SK-N-SH (cell line): ENCODE measurements at regions of chr3 and their contacts with region 1.

Region 1: GRCh38 chr3:50611464-50612233 is at the start of gene CISH:
- DNase-seq: peak; percentile 96
- H3K4me3 ChIP-seq: peak within 1 kb of the TSS; percentile 56 to 71
- H3K27ac ChIP-seq: peak within 1 kb of the TSS; percentile 14 to 73; a peak in 3 of 4 replicates
- H3K4me1 ChIP-seq: peaks cover 0 to 44% of the 10 kb centered on the region in 2 experiments; a peak in 1 of 4 replicates
- H3K27me3 ChIP-seq: no peaks in the 10 kb centered on the region
- CTCF ChIP-seq: peak; percentile 58
- EP300 ChIP-seq: no peak
- RAD21 ChIP-seq: no peak
- polyA plus RNA-seq, gene CISH: 2.0 and 2.6 TPM in 2 replicates

Region 2: DNA sequence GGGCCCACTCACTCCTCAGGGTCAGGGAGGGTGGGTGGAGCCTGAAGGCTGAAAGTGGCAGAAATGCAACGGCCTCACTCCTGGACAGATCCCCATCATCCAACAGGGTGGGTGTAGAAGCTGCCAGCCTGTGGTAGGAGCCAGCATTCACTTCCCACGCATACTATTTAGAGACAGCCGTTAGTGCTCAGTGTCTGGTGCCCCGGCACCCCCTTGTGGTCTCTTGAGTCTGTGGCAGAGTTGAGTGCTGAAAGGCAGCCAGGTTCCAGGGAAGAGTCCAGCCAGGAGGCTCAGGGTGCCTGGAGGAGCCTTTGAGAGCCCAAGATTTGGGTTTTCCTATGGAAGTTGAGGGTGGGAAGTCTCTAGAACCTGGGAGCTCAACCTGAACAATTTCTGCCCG is 422.4 kb before region 1 on chr3:
- CTCF ChIA-PET with region 1: no interaction called
- POLR2A ChIA-PET with region 1: no interaction called
- DNase-seq: peak; percentile 87
- H3K4me3 ChIP-seq: no peak overlapping the region; a peak in 1 of 4 replicates
- H3K27ac ChIP-seq: no peak overlapping the region
- H3K4me1 ChIP-seq: peaks cover 0 to 14% of the 10 kb centered on the region in 2 experiments; a peak in 1 of 4 replicates
- H3K27me3 ChIP-seq: peaks cover 17% of the 10 kb centered on the region
- CTCF ChIP-seq: peak; percentile 88
- EP300 ChIP-seq: no peak
- RAD21 ChIP-seq: peak; percentile 98

Region 3: GRCh38 chr3:50474717-50475116 is 136.9 kb before region 1 on chr3:
- CTCF ChIA-PET with region 1: no interaction called
- POLR2A ChIA-PET with region 1: no interaction called
- DNase-seq: no peak
- H3K4me3 ChIP-seq: no peak overlapping the region
- H3K27ac ChIP-seq: no peak overlapping the region
- H3K4me1 ChIP-seq: peaks cover 0 to 21% of the 10 kb centered on the region in 2 experiments; a peak in 1 of 4 replicates
- H3K27me3 ChIP-seq: no peaks in the 10 kb centered on the region
- CTCF ChIP-seq: no peak
- EP300 ChIP-seq: no peak
- RAD21 ChIP-seq: no peak

Region 4: DNA sequence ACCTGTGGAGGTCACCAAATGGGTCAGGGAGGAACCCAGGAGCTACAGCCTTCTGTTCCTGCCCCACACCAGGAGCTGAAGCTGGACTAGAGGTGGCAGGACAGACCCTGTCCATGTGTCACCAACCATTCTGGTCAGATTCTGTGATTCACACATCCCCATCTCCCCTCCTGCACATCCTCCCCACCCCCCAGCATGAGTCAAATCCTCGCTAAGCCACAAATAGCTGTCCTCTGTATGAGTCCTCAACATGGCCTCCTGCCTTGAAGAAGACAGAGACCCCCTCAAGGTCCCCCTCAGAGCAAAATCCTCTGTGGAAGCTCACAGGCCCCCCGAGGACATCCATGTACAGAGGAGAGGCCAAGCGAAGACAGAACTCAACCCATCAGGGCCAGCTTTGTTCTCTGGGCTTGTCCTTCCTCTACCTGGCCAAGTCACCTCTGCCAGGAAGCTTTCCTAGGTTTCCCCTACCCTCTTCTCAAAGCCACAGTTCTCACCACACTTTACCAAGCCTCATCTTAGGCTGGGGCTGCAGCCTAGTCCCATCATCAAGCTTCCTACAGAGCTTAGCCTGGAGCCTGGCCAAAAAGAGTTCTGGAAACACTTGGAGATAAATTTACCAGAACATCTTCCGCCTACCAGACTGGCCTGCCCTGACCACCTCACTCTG is 125.3 kb before region 1 on chr3:
- CTCF ChIA-PET with region 1: no interaction called
- POLR2A ChIA-PET with region 1: no interaction called
- DNase-seq: no peak
- H3K4me3 ChIP-seq: no peak overlapping the region
- H3K27ac ChIP-seq: no peak overlapping the region
- H3K4me1 ChIP-seq: peaks cover 0 to 62% of the 10 kb centered on the region in 2 experiments; a peak in 1 of 4 replicates
- H3K27me3 ChIP-seq: no peaks in the 10 kb centered on the region
- CTCF ChIP-seq: no peak
- EP300 ChIP-seq: no peak
- RAD21 ChIP-seq: no peak

Region 5: GRCh38 chr3:50550079-50550741 is 61.4 kb before region 1 on chr3:
- CTCF ChIA-PET with region 1: interaction called, 648 read pairs
- POLR2A ChIA-PET with region 1: no interaction called
- DNase-seq: peak; percentile 86
- H3K4me3 ChIP-seq: no peak overlapping the region; a peak in 1 of 4 replicates
- H3K27ac ChIP-seq: peak overlapping the region in 1 of 2 experiments; percentile 63; a peak in 2 of 4 replicates
- H3K4me1 ChIP-seq: peaks cover 0 to 45% of the 10 kb centered on the region in 2 experiments; a peak in 1 of 4 replicates
- H3K27me3 ChIP-seq: no peaks in the 10 kb centered on the region
- CTCF ChIP-seq: peak; percentile 64
- EP300 ChIP-seq: 0 out of 4 replicates have a peak, but pooled peaks of 1 of the 2 experiments have one; percentile 7
- RAD21 ChIP-seq: peak; percentile 80

Region 6: DNA sequence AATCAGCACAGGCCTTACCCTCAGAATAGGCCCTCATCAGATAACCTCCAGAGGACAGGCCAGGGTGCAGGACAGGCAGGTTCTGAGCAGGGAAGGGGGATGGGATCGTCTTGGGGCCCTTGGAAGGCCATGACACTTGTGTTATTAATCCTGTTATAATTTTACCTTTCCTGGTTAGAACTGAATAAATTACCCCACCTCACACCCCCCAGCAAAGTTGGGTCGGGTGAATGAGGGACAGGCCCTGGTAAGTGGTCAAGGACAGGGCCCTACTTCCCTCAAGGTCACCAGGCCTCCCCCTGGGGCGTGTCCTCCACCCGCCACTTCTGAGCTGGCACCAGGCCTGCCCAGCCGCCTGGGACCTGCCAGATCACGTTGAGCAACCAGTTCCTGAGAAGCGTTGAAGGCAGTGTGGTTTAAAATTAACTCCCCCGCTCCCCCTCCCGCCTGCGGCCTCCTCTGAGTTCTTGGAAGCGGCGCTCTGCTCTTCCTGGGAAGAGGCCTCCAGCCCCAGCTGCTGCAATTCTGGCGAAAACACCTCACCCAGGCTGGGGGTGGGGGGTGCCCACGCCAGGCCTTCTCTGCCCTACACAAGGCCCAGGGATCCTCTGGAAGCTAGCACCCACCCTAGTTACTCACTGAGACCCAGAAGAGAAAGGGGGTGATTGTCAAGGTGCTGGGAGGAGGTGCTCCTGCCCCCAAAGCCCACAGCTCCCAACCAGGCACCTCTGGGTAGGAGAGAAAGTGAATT is 10.6 kb before region 1 on chr3:
- CTCF ChIA-PET with region 1: interaction called, 111 read pairs
- POLR2A ChIA-PET with region 1: interaction called, 7 read pairs
- DNase-seq: peak; percentile 91
- H3K4me3 ChIP-seq: no peak overlapping the region; a peak in 1 of 4 replicates
- H3K27ac ChIP-seq: peak overlapping the region; percentile 70 to 93
- H3K4me1 ChIP-seq: peaks cover 17 to 38% of the 10 kb centered on the region in 2 experiments
- H3K27me3 ChIP-seq: no peaks in the 10 kb centered on the region
- CTCF ChIP-seq: no peak
- EP300 ChIP-seq: peak; percentile 60 to 75; a peak in 3 of 4 replicates
- RAD21 ChIP-seq: peak; percentile 16; the same call in 1 of the 2 replicates

Region 7: GRCh38 chr3:50652709-50653108 is 41.1 kb after region 1 on chr3:
- CTCF ChIA-PET with region 1: interaction called, 171 read pairs
- POLR2A ChIA-PET with region 1: interaction called, 3 read pairs
- DNase-seq: peak; percentile 45
- H3K4me3 ChIP-seq: no peak overlapping the region
- H3K27ac ChIP-seq: no peak overlapping the region
- H3K4me1 ChIP-seq: peaks cover 0 to 31% of the 10 kb centered on the region in 2 experiments; a peak in 1 of 4 replicates
- H3K27me3 ChIP-seq: no peaks in the 10 kb centered on the region
- CTCF ChIP-seq: peak; percentile 49
- EP300 ChIP-seq: no peak
- RAD21 ChIP-seq: peak; percentile 58

Region 8: GRCh38 chr3:51371943-51372557 is 760.4 kb after region 1 on chr3:
- CTCF ChIA-PET with region 1: interaction called, 83 read pairs
- POLR2A ChIA-PET with region 1: no interaction called
- DNase-seq: peak; percentile 56
- H3K4me3 ChIP-seq: no peak overlapping the region; a peak in 1 of 4 replicates
- H3K27ac ChIP-seq: no peak overlapping the region
- H3K4me1 ChIP-seq: no peaks in the 10 kb centered on the region
- H3K27me3 ChIP-seq: no peaks in the 10 kb centered on the region; the same call in 1 of the 2 replicates
- CTCF ChIP-seq: peak; percentile 90
- EP300 ChIP-seq: no peak
- RAD21 ChIP-seq: peak; percentile 85

Region 9: GRCh38 chr3:51391075-51391567 is 779.5 kb after region 1 on chr3 and contains the start of gene RBM15B:
- CTCF ChIA-PET with region 1: interaction called, 27 read pairs
- POLR2A ChIA-PET with region 1: interaction called, 8 read pairs
- DNase-seq: peak; percentile 98
- H3K4me3 ChIP-seq: peak within 1 kb of the TSS; percentile 76 to 89
- H3K27ac ChIP-seq: peak within 1 kb of the TSS; percentile 53 to 81
- H3K4me1 ChIP-seq: peaks cover 27 to 76% of the 10 kb centered on the region in 2 experiments
- H3K27me3 ChIP-seq: no peaks in the 10 kb centered on the region
- CTCF ChIP-seq: no peak; the same call in 1 of the 2 replicates
- EP300 ChIP-seq: peak in 1 of 2 experiments; percentile 8; a peak in 1 of 4 replicates
- RAD21 ChIP-seq: peak; percentile 54
- polyA plus RNA-seq, gene RBM15B: 11.3 and 17.0 TPM in 2 replicates